ENCODE measurements at regions of chr9 and their contacts with region 1.

Region 1: GRCh38 chr9:26061948-26062571 is 383.8 kb upstream of the TUSC1 start:
- DNase-seq: no peak
- ATAC-seq: no peak
- H3K4me3 ChIP-seq: no peak overlapping the region
- H3K27ac ChIP-seq: no peak overlapping the region
- H3K4me1 ChIP-seq: no peaks in the 10 kb centered on the region
- H3K27me3 ChIP-seq: no peaks in the 10 kb centered on the region
- CTCF ChIP-seq: no peak
- POLR2A ChIP-seq: no peak
- RAD21 ChIP-seq: no peak

Region 2: DNA sequence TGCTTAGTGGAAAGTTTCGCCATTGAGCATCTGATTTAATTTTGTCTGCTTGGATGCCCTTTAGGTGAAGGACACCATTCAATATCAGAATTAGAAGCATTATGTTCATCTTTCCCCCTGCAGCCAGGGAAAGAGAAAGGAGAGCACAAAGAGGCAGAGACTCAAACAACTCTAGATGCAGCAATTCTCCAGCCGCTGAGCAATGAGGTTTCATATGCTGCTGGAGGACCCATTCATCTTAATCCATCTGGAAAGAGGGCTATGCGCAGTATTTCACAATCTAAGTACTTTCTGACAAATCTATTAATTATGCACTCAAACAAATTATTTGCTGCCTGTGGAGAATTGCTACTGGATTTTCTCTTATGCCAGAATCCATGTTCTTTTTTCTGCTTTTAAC is 143.2 kb after region 1 on chr9:
- CTCF ChIA-PET with region 1: no interaction called
- POLR2A ChIA-PET with region 1: no interaction called
- dilution Hi-C with region 1: no loop called
- in situ Hi-C with region 1: no loop called
- intact Hi-C with region 1: loop called (anchors 10 kb)
- DNase-seq: no peak
- ATAC-seq: no peak
- H3K4me3 ChIP-seq: no peak overlapping the region
- H3K27ac ChIP-seq: no peak overlapping the region
- H3K4me1 ChIP-seq: no peaks in the 10 kb centered on the region
- H3K27me3 ChIP-seq: no peaks in the 10 kb centered on the region
- CTCF ChIP-seq: no peak
- POLR2A ChIP-seq: no peak
- RAD21 ChIP-seq: no peak